Activated CD4-positive, alpha-beta T cell treated with anti-CD3 and anti-CD28 coated beads for 36 hours (primary cell): ENCODE measurements at regions of chr11 and their contacts with region 1.

Region 1: GRCh38 chr11:58524232-58525036 is 16.5 kb upstream of the OR5B21 start:
- DNase-seq: peak; percentile 69
- ATAC-seq: peak; percentile 69
- H3K4me3 Mint-ChIP-seq: peak overlapping the region; percentile 47
- H3K27ac Mint-ChIP-seq: peak overlapping the region; percentile 90
- H3K4me1 Mint-ChIP-seq: peaks cover 58% of the 10 kb centered on the region
- H3K27me3 Mint-ChIP-seq: no peaks in the 10 kb centered on the region

Region 2: GRCh38 chr11:57667736-57668435 is 856.5 kb before region 1 on chr11 and contains the start of gene ZDHHC5:
- CTCF ChIA-PET with region 1: interaction called, 3 read pairs
- POLR2A ChIA-PET with region 1: interaction called, 3 read pairs
- intact Hi-C with region 1: loop called (anchors 5 to 10 kb)
- DNase-seq: peak; percentile 100
- ATAC-seq: peak; percentile 88
- H3K4me3 Mint-ChIP-seq: peak within 1 kb of the TSS; percentile 99
- H3K27ac Mint-ChIP-seq: peak within 1 kb of the TSS; percentile 99
- H3K4me1 Mint-ChIP-seq: peaks cover 37% of the 10 kb centered on the region
- H3K27me3 Mint-ChIP-seq: no peaks in the 10 kb centered on the region
- total RNA-seq, gene ZDHHC5: 46.2 to 60.0 TPM

Region 3: GRCh38 chr11:57800444-57801182 is 723.8 kb before region 1 on chr11:
- CTCF ChIA-PET with region 1: interaction called, 3 read pairs
- POLR2A ChIA-PET with region 1: no interaction called
- intact Hi-C with region 1: loop called (anchors 5 to 10 kb)
- DNase-seq: no peak
- ATAC-seq: peak; percentile 91
- H3K4me3 Mint-ChIP-seq: no peak overlapping the region
- H3K27ac Mint-ChIP-seq: peak overlapping the region; percentile 59
- H3K4me1 Mint-ChIP-seq: peaks cover 27% of the 10 kb centered on the region
- H3K27me3 Mint-ChIP-seq: no peaks in the 10 kb centered on the region

Region 4: GRCh38 chr11:58204042-58204441 is 320.4 kb before region 1 on chr11 and contains the start of gene OR1S2:
- CTCF ChIA-PET with region 1: no interaction called
- POLR2A ChIA-PET with region 1: no interaction called
- intact Hi-C with region 1: no loop called
- DNase-seq: no peak
- ATAC-seq: no peak
- H3K4me3 Mint-ChIP-seq: no peak within 1 kb of the TSS
- H3K27ac Mint-ChIP-seq: no peak within 1 kb of the TSS
- H3K4me1 Mint-ChIP-seq: no peaks in the 10 kb centered on the region
- H3K27me3 Mint-ChIP-seq: peaks cover 23% of the 10 kb centered on the region
- total RNA-seq, gene OR1S2: not detected

Region 5: GRCh38 chr11:58513747-58514367 is 10.6 kb before region 1 on chr11:
- CTCF ChIA-PET with region 1: interaction called, 26 read pairs
- POLR2A ChIA-PET with region 1: no interaction called
- intact Hi-C with region 1: no loop called
- DNase-seq: peak; percentile 41
- ATAC-seq: peak; percentile 44
- H3K4me3 Mint-ChIP-seq: no peak overlapping the region
- H3K27ac Mint-ChIP-seq: no peak overlapping the region
- H3K4me1 Mint-ChIP-seq: peaks cover 4% of the 10 kb centered on the region
- H3K27me3 Mint-ChIP-seq: no peaks in the 10 kb centered on the region

Region 6: DNA sequence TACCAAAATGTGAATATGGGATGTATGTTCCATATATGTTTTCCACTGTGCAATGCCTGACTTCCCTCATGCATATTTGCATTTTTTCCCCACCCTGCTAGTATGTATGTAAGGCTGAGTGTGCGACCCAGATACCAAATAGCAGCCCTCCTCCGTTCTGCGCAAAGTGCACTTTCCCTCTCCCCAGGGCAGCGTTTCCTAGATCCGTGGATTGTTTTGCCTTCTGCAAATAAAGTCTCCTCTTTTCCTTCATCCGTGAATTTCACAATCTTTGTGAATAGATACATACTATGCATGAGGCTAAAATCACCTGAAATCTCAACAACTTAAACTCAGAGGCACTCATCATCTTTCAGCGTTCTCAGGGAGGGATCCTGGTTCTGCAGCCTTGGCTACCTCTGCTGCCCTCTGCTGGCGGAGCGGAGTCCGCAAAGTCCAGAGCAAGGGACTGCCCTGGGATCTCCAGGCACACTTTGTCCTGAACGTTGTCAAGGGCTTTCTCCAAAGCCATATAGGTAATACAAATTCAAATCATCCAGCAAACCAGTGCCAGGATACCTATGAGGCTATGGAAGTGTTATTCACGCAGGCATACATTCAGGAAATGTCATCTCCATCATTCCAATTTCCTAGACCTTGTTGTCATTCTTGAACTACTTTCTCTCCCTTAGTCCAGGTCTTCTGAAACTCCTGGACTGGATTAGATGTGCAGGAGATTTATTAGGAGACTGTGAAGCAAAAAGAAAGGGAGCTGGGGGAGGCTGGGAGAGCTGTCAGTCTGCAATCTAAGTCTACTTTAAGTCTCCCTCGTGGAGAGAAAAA is 151.1 kb after region 1 on chr11:
- CTCF ChIA-PET with region 1: no interaction called
- POLR2A ChIA-PET with region 1: no interaction called
- intact Hi-C with region 1: loop called in 1 of 2 experiments (anchors 2 kb)
- DNase-seq: peak; percentile 88
- ATAC-seq: peak; percentile 94
- H3K4me3 Mint-ChIP-seq: no peak overlapping the region
- H3K27ac Mint-ChIP-seq: no peak overlapping the region
- H3K4me1 Mint-ChIP-seq: no peaks in the 10 kb centered on the region
- H3K27me3 Mint-ChIP-seq: no peaks in the 10 kb centered on the region